ENCODE measurements at regions of chr5 and their contacts with region 1.

Region 1: DNA sequence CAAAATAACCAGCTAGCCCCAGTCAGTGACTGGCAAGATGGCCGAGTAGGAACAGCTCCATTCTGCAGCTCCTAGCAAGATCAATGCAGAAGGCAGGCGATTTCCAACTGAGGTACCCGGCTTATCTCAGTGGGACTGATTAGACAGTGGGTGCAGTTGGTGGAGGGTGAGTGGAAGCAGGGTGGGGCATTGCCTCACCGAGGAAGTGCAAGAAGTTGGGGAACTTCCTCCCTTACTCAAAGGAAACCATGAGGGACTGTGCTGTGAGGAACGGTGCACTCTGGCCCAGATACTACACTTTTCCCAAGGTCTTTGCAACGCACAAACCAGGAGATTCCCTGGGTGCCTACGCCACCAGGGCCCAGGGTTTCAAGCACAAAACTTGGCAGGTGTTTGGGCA is 9.6 kb upstream of the BTNL8 start:
- DNase-seq: no peak
- H3K4me3 ChIP-seq: no peak overlapping the region
- H3K27ac ChIP-seq: no peak overlapping the region
- H3K4me1 ChIP-seq: no peaks in the 10 kb centered on the region
- H3K27me3 ChIP-seq: peaks cover 17% of the 10 kb centered on the region
- CTCF ChIP-seq: no peak

Region 2: DNA sequence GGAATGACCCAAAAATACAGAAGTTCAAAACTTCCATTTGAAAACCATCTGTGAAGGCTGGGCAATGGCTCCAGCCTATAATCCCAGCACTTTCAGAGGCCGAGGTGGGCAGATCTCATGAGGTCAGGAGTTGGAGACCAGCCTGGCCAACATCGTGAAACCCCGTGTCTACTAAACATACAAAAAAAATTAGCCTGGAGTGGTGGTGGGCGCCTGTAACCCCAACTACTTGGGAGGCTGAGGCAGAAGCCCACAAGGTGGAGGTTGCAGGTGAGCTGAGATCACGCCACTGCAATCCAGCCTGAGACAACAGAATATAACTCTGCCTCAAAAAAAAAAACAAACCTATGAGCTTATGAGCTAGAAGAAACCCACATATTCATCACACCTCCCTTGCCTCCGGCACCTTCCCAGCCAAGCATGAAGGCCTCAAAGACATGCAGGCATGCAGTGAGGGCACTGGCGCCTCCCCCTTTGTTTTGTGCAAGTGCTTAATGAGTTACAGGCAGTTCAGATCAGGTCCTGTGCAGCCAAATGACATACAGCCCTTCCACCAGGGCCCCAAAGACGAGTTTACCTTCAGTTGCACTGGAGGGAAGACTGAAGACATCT is 1275.8 kb before region 1 on chr5:
- CTCF ChIA-PET with region 1: no interaction called
- POLR2A ChIA-PET with region 1: no interaction called
- intact Hi-C with region 1: no loop called
- DNase-seq: no peak
- H3K4me3 ChIP-seq: no peak overlapping the region
- H3K27ac ChIP-seq: no peak overlapping the region
- H3K4me1 ChIP-seq: no peaks in the 10 kb centered on the region; the same call in 1 of the 2 replicates
- H3K27me3 ChIP-seq: no peaks in the 10 kb centered on the region
- CTCF ChIP-seq: no peak

Region 3: DNA sequence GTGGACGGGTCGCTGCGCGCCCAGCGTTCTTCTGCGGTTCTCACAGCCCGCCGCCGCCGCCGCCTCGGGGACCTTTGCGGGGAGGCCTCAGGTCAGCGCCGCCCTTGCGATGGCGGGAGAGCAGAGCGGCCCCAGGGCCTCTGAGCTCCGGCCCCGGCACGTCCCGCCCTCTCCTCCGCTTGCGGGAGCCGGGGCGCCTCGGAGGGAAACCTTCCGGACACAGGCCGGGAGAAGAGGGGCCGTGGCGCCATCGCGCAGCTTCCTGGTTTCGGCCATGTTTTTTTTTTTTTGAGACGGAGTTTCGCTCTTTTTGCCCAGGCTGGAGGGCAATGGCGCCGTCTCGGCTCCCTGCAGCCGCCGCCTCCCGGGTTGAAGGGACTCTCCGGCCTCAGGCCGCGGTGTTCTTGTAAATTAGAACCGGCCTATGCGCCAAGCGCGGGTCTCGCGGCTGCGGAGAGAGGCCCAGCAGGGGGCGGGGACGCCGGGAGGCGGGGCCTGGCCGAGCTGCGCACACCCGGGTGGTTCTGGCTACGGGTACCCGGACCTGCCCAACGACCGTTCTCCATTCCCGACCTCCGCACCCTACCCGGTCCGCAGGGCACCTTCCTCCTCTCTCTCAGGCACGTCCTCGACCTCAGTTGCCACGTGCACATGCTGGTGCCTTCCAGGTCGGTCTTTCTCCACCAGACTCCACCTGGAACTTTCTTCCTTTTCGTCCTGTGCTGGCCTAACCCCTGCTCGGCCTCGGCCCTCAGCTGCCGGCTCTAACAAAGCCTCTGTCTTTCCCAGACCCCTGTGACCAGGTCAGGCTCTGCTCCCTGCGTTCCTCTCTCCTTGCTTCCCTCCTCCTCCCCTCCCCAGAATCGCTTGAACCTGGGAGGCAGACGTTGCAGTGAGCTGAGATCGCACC is 58.0 kb before region 1 on chr5:
- CTCF ChIA-PET with region 1: no interaction called
- POLR2A ChIA-PET with region 1: no interaction called
- intact Hi-C with region 1: no loop called
- DNase-seq: peak; percentile 49 to 82
- H3K4me3 ChIP-seq: peak overlapping the region; percentile 72
- H3K27ac ChIP-seq: peak overlapping the region; percentile 72
- H3K4me1 ChIP-seq: peaks cover 23% of the 10 kb centered on the region
- H3K27me3 ChIP-seq: no peaks in the 10 kb centered on the region
- CTCF ChIP-seq: 0 out of 2 replicates have a peak, but pooled peaks have one; percentile 27

Region 4: GRCh38 chr5:181260387-181261319 is 371.3 kb after region 1 on chr5 and contains the start of gene TRIM52:
- CTCF ChIA-PET with region 1: no interaction called
- POLR2A ChIA-PET with region 1: interaction called, 17 read pairs
- intact Hi-C with region 1: no loop called
- DNase-seq: peak; percentile 83 to 91
- H3K4me3 ChIP-seq: peak within 1 kb of the TSS; percentile 96
- H3K27ac ChIP-seq: peak within 1 kb of the TSS; percentile 66
- H3K4me1 ChIP-seq: peaks cover 36% of the 10 kb centered on the region
- H3K27me3 ChIP-seq: no peaks in the 10 kb centered on the region
- CTCF ChIP-seq: no peak
- total RNA-seq, gene TRIM52: 15.2 and 15.7 TPM in 2 replicates

Measured in PC-9 (cell line).